ENCODE measurements at regions of chr3 and their contacts with region 1.

Region 1: DNA sequence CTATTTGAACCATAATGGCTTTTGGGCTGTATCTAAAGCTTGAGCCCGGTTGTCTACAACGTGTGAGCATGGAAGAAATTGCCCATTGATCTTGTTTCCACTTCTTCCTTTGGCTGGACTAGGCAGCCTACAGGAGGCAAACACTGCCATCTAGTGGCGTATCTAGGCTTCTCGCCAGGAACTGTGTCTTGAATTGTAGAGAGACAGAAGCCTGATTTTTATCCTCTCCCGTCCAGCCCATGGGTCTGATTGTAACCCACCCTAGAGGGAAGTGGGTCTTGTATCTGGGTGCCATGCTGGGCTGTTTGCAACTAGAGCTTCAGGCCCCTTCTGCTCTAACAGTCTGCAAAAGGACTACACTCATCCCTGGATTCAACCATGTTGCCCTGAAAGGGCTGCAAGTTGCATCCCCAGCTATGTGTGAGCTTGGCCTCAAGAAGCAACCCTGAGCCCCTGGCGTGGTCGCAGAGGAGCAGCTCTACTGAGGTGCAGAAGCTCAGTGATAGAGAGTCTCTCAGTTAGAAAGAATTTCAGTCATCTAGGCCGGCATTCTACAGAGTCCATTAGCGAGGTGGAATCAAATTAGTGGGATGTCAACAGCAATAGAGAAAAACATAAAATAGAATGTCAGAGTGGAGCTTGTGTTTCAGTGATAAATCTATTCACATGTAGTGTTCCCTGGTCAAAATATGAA is 170.2 kb upstream of the UMPS start:
- DNase-seq: peak; percentile 82 to 92
- H3K4me3 ChIP-seq: no peak overlapping the region
- H3K27ac ChIP-seq: peak overlapping the region in 4 of 5 donors; percentile 45 to 81 (median 72)
- H3K4me1 ChIP-seq: peaks cover 13 to 65% (median 46%) of the 10 kb centered on the region in 4 donors
- H3K27me3 ChIP-seq: no peaks in the 10 kb centered on the region
- CTCF ChIP-seq: peak in 5 of 7 experiments; percentile 71 to 80 (median 75)
- EP300 ChIP-seq: no peak
- POLR2A ChIP-seq: no peak

Region 2: GRCh38 chr3:124351430-124352148 is 208.4 kb before region 1 on chr3:
- intact Hi-C with region 1: loop called (anchors 10 kb)
- DNase-seq: peak in 1 of 2 donors; percentile 85
- H3K4me3 ChIP-seq: no peak overlapping the region
- H3K27ac ChIP-seq: no peak overlapping the region
- H3K4me1 ChIP-seq: peaks cover 0 to 15% (median 0%) of the 10 kb centered on the region in 4 donors
- H3K27me3 ChIP-seq: no peaks in the 10 kb centered on the region
- CTCF ChIP-seq: peak in 3 of 7 experiments; percentile 28 to 42 (median 29)
- EP300 ChIP-seq: no peak
- POLR2A ChIP-seq: no peak

Region 3: DNA sequence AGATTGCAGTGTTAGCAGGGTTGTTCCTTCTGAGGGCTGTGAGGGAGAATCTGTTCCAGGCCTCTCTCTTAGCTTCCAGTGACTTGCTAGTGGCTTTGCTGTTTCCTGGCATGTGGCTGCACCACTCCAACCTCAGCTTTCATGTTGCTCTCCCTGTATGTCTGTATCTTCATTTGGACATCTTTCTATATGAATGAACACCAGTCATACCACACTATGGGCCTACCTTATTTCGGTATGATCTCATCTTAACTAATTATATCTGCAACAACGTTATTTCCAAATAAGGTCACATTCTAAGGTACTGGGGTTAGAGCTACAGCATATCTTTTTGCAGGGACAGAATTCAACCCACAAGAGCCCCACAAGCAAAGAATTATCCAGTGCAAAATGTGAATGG is 186.5 kb before region 1 on chr3:
- intact Hi-C with region 1: no loop called
- DNase-seq: no peak
- H3K4me3 ChIP-seq: no peak overlapping the region
- H3K27ac ChIP-seq: no peak overlapping the region
- H3K4me1 ChIP-seq: no peaks in the 10 kb centered on the region
- H3K27me3 ChIP-seq: no peaks in the 10 kb centered on the region
- CTCF ChIP-seq: no peak
- EP300 ChIP-seq: no peak
- POLR2A ChIP-seq: no peak

Region 4: GRCh38 chr3:124409789-124410261 is 150.2 kb before region 1 on chr3:
- intact Hi-C with region 1: no loop called
- DNase-seq: no peak
- H3K4me3 ChIP-seq: no peak overlapping the region
- H3K27ac ChIP-seq: no peak overlapping the region
- H3K4me1 ChIP-seq: no peaks in the 10 kb centered on the region
- H3K27me3 ChIP-seq: no peaks in the 10 kb centered on the region
- CTCF ChIP-seq: no peak
- EP300 ChIP-seq: no peak
- POLR2A ChIP-seq: no peak

Region 5: DNA sequence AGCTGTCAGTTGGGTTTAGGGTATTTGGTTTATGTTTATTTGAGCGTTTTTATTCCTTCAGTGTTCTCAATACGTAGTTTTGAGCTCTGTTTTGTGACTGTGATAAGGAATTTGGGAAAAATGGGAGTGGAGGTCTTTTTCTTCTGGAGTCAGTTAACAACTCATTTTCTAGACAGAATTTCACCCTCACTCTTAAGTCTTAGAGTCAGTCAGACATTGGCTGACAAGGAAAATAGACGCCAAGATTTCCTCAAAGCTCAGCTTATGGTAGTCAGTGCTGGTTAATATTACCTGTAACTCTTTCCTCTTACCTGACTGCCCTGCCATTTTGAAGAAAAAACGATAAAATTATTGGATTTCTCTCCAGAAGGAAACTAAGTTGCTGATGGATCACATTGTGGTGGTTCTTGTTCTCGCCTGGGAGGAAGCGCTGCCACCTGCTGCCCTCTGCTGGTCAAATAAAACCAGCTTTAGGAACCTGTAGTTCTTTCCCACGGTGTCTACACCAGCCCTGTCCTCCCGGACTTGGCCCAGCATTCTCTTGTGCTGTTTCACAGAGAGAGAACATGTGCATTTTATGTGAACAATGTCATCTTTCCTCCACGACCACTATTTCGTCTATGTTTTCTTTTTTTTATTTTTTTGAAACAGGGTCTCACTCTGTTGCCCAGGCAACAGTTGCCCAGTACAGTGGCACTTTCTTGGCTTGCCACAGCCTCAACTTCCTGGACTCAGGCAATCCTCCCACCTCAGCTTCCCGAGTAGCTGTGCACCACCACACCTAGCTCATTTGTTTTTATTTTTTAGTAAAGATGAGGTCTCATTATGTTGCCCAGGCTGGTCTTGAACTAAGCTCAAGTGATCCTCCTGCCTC is 128.8 kb after region 1 on chr3:
- intact Hi-C with region 1: loop called (anchors 5 kb)
- DNase-seq: peak; percentile 85 to 94
- H3K4me3 ChIP-seq: no peak overlapping the region
- H3K27ac ChIP-seq: no peak overlapping the region
- H3K4me1 ChIP-seq: peaks cover 0 to 24% (median 14%) of the 10 kb centered on the region in 4 donors
- H3K27me3 ChIP-seq: no peaks in the 10 kb centered on the region
- CTCF ChIP-seq: peak in 5 of 7 experiments; percentile 66 to 85 (median 79)
- EP300 ChIP-seq: no peak
- POLR2A ChIP-seq: no peak

Region 6: GRCh38 chr3:125087768-125088391 is 527.9 kb after region 1 on chr3:
- intact Hi-C with region 1: no loop called
- DNase-seq: no peak
- H3K4me3 ChIP-seq: no peak overlapping the region
- H3K27ac ChIP-seq: no peak overlapping the region
- H3K4me1 ChIP-seq: no peaks in the 10 kb centered on the region
- H3K27me3 ChIP-seq: no peaks in the 10 kb centered on the region
- CTCF ChIP-seq: no peak
- EP300 ChIP-seq: no peak
- POLR2A ChIP-seq: no peak